K562 (cell line): ENCODE measurements at regions of chr1 and their contacts with region 1.

Region 1: GRCh38 chr1:75954586-75954985 is 22.4 kb upstream of the ASB17 start:
- DNase-seq: no peak
- ATAC-seq: no peak
- H3K4me3 ChIP-seq: no peak overlapping the region
- H3K27ac ChIP-seq: no peak overlapping the region
- H3K4me1 ChIP-seq: no peaks in the 10 kb centered on the region
- H3K27me3 ChIP-seq: no peaks in the 10 kb centered on the region
- CTCF ChIP-seq: no peak
- EP300 ChIP-seq: no peak
- POLR2A ChIP-seq: no peak
- RAD21 ChIP-seq: no peak

Region 2: GRCh38 chr1:75908717-75909152 is 45.9 kb before region 1 on chr1:
- CTCF ChIA-PET with region 1: no interaction called
- POLR2A ChIA-PET with region 1: no interaction called
- in situ Hi-C with region 1: no loop called
- intact Hi-C with region 1: loop called (anchors 5 kb)
- DNase-seq: peak in 1 of 4 experiments; percentile 30
- ATAC-seq: peak; percentile 85
- H3K4me3 ChIP-seq: no peak overlapping the region
- H3K27ac ChIP-seq: no peak overlapping the region
- H3K4me1 ChIP-seq: no peaks in the 10 kb centered on the region
- H3K27me3 ChIP-seq: no peaks in the 10 kb centered on the region
- CTCF ChIP-seq: peak; percentile 42 to 55 (median 45); a peak in 5 of 6 replicates
- EP300 ChIP-seq: no peak
- POLR2A ChIP-seq: no peak
- RAD21 ChIP-seq: peak; percentile 40 to 62